A549 (cell line): ENCODE measurements at regions of chr3 and their contacts with region 1.

Region 1: DNA sequence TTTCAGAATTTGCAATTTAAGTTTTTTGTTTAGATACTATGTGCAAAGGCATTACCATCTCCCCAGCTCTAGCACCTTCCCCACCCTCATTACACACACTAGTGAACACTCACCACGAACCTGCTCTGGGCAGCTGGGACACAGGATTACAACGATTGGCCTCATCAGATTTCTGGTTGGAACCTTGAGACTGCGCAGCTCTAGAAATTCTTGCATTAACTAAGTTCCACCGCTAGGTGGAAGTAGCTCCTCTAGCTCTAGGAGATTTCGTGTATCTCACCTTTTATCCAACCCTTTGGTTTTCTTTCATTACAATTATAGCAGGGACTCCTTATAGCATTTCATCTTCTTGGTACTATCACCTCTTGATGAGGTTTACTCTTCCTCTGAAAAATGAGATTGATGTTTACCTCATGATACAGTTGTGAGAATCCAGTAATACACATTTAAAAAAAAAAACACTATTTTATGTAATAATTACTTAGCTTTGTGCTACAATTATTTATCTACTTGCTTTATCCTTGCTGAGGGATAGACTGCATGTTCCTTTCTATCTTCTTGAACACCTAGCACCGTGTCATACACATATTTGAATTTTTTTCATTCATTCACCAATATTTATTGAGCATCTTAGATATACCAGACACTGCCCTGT is 28.7 kb upstream of the PLOD2 start:
- DNase-seq: peak; percentile 42 to 72
- ATAC-seq: peak; percentile 81 to 94
- H3K4me3 ChIP-seq: peak overlapping the region; percentile 24; the same call in 1 of the 3 replicates
- H3K27ac ChIP-seq: peak overlapping the region; percentile 56 to 65; a peak in 4 of 6 replicates
- H3K4me1 ChIP-seq: peaks cover 33% of the 10 kb centered on the region
- CTCF ChIP-seq: peak; percentile 86
- EP300 ChIP-seq: no peak
- POLR2A ChIP-seq: no peak
- RAD21 ChIP-seq: peak; percentile 81 to 86

Region 2: DNA sequence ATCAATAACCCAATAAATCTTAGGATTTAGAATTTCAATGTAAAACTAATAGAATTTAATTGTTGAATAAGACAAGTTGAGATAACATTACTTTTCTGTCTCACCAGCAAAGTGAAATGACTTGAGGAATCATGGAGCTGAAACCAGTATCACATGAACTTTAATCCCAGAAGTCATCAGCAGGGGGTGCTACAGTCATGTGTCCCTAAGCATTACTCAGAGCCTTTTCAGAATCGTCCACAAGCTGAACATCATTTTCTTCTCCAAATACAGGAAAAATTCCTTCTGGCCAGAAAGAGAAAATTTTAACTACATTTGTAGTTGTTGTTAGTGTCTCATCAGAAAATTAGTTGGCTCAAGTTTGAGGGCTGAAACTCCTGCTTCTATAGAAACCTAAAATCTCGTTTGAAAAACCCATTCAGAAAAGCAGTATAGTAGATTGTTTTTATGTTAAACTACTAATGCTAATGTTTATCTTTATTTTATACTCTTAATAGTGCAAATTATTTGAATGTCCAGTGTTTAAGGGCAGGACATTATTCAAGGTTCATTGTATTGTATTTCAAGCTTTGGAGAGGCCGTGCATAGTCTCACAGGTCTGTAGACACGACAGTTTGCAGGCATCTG is 412.8 kb before region 1 on chr3:
- CTCF ChIA-PET with region 1: interaction called, 10 read pairs
- POLR2A ChIA-PET with region 1: no interaction called
- DNase-seq: peak; percentile 11 to 68
- ATAC-seq: peak; percentile 81 to 82; a peak in 5 of 6 replicates
- H3K4me3 ChIP-seq: no peak overlapping the region
- H3K27ac ChIP-seq: no peak overlapping the region
- H3K4me1 ChIP-seq: no peaks in the 10 kb centered on the region
- CTCF ChIP-seq: peak; percentile 68
- EP300 ChIP-seq: no peak
- POLR2A ChIP-seq: no peak
- RAD21 ChIP-seq: peak; percentile 65 to 69

Region 3: DNA sequence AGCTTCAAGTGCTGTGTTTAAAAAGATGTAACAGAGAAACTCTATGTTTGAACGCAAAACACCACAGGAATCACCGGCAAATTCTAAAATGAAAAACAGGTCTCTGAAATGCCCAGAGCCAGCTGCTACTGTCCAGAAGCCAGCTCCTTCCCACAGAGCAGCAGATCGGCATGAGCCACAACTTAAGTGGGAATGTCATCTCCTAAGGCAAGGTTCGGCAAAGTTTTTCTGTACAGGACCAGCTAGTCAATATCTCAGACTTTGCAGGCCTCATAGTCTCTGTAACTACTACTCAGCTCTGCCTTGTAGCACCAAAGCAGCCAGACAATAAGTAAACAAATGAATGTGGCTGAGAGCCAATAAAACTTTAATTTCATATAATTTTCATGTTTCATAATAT is 33.6 kb before region 1 on chr3:
- CTCF ChIA-PET with region 1: interaction called, 21 read pairs
- POLR2A ChIA-PET with region 1: interaction called, 18 read pairs
- DNase-seq: no peak
- ATAC-seq: no peak
- H3K4me3 ChIP-seq: peak overlapping the region; percentile 90
- H3K27ac ChIP-seq: peak overlapping the region; percentile 45 to 72
- H3K4me1 ChIP-seq: peaks cover 74% of the 10 kb centered on the region
- CTCF ChIP-seq: no peak
- EP300 ChIP-seq: no peak
- POLR2A ChIP-seq: no peak
- RAD21 ChIP-seq: no peak

Region 4: GRCh38 chr3:146177519-146177918 is 12.1 kb before region 1 on chr3:
- CTCF ChIA-PET with region 1: interaction called, 28 read pairs
- POLR2A ChIA-PET with region 1: no interaction called
- DNase-seq: no peak
- ATAC-seq: no peak
- H3K4me3 ChIP-seq: no peak overlapping the region
- H3K27ac ChIP-seq: peak overlapping the region in 1 of 2 experiments; percentile 28; a peak in 1 of 6 replicates
- H3K4me1 ChIP-seq: peaks cover 5% of the 10 kb centered on the region; the same call in 2 of the 3 replicates
- CTCF ChIP-seq: no peak
- EP300 ChIP-seq: no peak
- POLR2A ChIP-seq: no peak
- RAD21 ChIP-seq: no peak

Region 5: GRCh38 chr3:146250449-146251382 is 61.1 kb after region 1 on chr3 and contains the start of gene PLSCR4:
- CTCF ChIA-PET with region 1: no interaction called
- POLR2A ChIA-PET with region 1: no interaction called
- DNase-seq: peak; percentile 53 to 61
- ATAC-seq: peak; percentile 93 to 96
- H3K4me3 ChIP-seq: peak within 1 kb of the TSS; percentile 84
- H3K27ac ChIP-seq: peak within 1 kb of the TSS; percentile 80 to 91
- H3K4me1 ChIP-seq: peaks cover 15% of the 10 kb centered on the region; the same call in 2 of the 3 replicates
- CTCF ChIP-seq: no peak
- EP300 ChIP-seq: no peak
- POLR2A ChIP-seq: no peak
- RAD21 ChIP-seq: 0 out of 5 replicates have a peak, but pooled peaks of 1 of the 2 experiments have one; percentile 11
- polyA plus RNA-seq, gene PLSCR4: 17.2 and 20.5 TPM in 2 replicates

Region 6: GRCh38 chr3:146326670-146327543 is 137.3 kb after region 1 on chr3:
- CTCF ChIA-PET with region 1: interaction called, 46 read pairs
- POLR2A ChIA-PET with region 1: interaction called, 7 read pairs
- DNase-seq: peak; percentile 31 to 66
- ATAC-seq: peak; percentile 93
- H3K4me3 ChIP-seq: no peak overlapping the region
- H3K27ac ChIP-seq: peak overlapping the region; percentile 28 to 56; a peak in 4 of 6 replicates
- H3K4me1 ChIP-seq: no peaks in the 10 kb centered on the region
- CTCF ChIP-seq: peak; percentile 88
- EP300 ChIP-seq: no peak
- POLR2A ChIP-seq: no peak
- RAD21 ChIP-seq: peak; percentile 88 to 96

Region 7: GRCh38 chr3:146640955-146641867 is 451.6 kb after region 1 on chr3:
- CTCF ChIA-PET with region 1: interaction called, 18 read pairs
- POLR2A ChIA-PET with region 1: no interaction called
- DNase-seq: peak; percentile 21 to 61
- ATAC-seq: peak; percentile 87 to 92
- H3K4me3 ChIP-seq: no peak overlapping the region
- H3K27ac ChIP-seq: no peak overlapping the region
- H3K4me1 ChIP-seq: no peaks in the 10 kb centered on the region
- CTCF ChIP-seq: peak; percentile 64
- EP300 ChIP-seq: no peak
- POLR2A ChIP-seq: no peak
- RAD21 ChIP-seq: peak; percentile 68 to 78